Common myeloid progenitor, CD34-positive (primary cell): ENCODE measurements at regions of chr2 and their contacts with region 1.

Region 1: DNA sequence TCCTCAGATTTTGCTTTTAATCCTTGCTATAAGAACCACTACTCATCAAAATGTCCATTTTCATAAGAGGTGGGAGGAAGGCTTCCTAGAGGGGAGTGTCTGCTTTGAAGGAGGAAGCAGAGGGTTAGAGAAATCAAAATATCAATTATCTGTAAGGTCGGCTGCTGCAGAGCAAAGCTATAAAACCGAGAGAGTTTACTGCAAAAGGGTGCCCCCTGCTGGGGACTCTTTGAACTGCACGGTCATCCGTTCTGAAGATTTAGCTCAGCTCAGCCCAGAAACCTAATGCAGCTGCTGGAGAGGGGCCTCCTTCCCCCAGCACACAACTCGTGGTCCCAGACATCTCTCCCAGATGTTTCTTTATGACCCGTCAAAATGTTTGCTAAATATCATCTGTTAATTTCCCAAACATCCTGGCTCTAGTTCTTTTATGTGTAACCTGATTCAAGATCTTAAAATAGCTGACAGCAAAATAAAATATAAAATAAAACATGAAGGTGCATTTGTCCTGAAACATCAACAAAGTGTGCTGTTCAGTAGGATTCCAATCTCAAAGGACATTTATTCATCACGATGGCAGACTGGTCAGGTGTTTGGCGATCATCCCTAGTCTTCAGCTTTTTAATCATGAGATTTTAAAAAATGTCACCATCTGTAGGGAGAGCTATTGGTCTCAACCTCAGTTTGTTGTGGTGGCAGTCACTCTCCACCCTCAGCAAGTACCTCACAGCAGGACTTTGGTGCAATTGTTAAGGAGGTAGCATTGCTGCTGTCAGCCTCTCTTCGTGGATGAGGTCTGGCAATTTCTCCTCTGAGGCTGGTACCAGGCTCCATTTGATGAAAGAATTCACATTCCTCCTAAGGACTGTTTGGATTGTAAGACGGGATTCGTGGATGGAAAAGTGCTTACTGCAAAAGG is 185.9 kb downstream of the MTX2 start:
- DNase-seq: peak; percentile 64 to 78 (median 67)
- H3K4me3 ChIP-seq: no peak overlapping the region
- H3K27ac ChIP-seq: no peak overlapping the region
- H3K4me1 ChIP-seq: peaks cover 0 to 3% (median 0%) of the 10 kb centered on the region in 4 experiments
- H3K27me3 ChIP-seq: peaks cover 0 to 45% (median 28%) of the 10 kb centered on the region in 5 experiments

Region 2: DNA sequence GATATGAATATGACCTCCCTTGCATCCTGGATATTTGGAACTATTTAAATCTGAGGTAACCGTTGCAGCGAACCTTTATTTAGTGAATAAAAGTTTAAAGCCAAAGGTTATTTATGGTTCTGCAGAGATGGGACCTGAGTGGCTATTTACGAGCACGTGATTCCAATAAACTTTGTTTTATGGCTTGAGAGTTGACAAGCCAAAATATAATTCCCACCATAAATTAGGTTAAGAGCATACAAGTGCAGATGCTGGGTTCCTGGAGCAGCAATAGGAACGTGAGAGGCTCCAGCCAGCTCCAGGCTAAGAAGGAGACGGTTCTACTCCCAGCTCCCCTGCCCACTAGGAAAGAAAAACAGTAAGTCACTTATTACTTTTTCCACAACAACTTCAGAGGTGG is 309.1 kb before region 1 on chr2:
- CTCF ChIA-PET with region 1: interaction called, 28 read pairs
- POLR2A ChIA-PET with region 1: no interaction called
- DNase-seq: no peak
- H3K4me3 ChIP-seq: no peak overlapping the region
- H3K27ac ChIP-seq: no peak overlapping the region
- H3K4me1 ChIP-seq: no peaks in the 10 kb centered on the region
- H3K27me3 ChIP-seq: peaks cover 17 to 97% (median 67%) of the 10 kb centered on the region in 5 experiments

Region 3: GRCh38 chr2:176174824-176175708 is 280.1 kb before region 1 on chr2:
- CTCF ChIA-PET with region 1: interaction called, 10 read pairs
- POLR2A ChIA-PET with region 1: no interaction called
- DNase-seq: no peak
- H3K4me3 ChIP-seq: no peak overlapping the region
- H3K27ac ChIP-seq: no peak overlapping the region
- H3K4me1 ChIP-seq: peaks cover 0 to 18% (median 10%) of the 10 kb centered on the region in 4 experiments
- H3K27me3 ChIP-seq: peaks cover 40 to 100% (median 73%) of the 10 kb centered on the region in 5 experiments

Region 4: GRCh38 chr2:176679061-176679669 is 224.0 kb after region 1 on chr2:
- CTCF ChIA-PET with region 1: no interaction called
- POLR2A ChIA-PET with region 1: no interaction called
- DNase-seq: peak in 1 of 3 donors; percentile 4
- H3K4me3 ChIP-seq: no peak overlapping the region
- H3K27ac ChIP-seq: no peak overlapping the region
- H3K4me1 ChIP-seq: no peaks in the 10 kb centered on the region
- H3K27me3 ChIP-seq: peaks cover 0 to 22% (median 8%) of the 10 kb centered on the region in 5 experiments